ENCODE measurements at regions of chr18 and their contacts with region 1.

Region 1: DNA sequence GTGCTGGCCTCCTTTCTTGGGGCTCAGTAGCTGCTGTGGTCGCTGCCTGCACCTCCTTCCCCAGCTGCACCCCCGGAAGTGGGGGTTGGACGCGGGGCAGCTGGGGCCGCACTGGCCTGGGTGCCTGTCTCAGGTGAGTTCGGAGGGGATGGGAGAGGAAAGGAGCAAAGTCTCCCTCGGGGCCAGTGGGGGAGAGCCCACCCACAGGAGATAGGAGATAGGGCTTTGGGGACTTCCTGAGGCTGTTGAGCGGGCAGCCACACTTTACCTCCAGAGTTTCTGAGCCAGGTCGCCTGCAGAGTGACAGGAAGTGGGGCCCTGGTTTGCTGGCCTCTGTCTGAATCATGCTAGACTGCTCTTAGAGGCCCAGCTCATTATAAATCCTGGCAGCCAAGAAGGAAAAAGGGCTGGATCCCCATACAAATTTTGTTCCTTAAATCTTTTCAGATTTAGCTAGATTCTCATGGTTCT is 8.1 kb downstream of the MBP start:
- DNase-seq: peak; percentile 73
- H3K4me3 Mint-ChIP-seq: peak overlapping the region; percentile 57
- H3K27ac Mint-ChIP-seq: peak overlapping the region; percentile 86
- H3K4me1 Mint-ChIP-seq: peaks cover 86% of the 10 kb centered on the region
- H3K27me3 Mint-ChIP-seq: no peaks in the 10 kb centered on the region

Region 2: GRCh38 chr18:77108001-77108692 is 16.3 kb before region 1 on chr18:
- CTCF ChIA-PET with region 1: interaction called, 31 read pairs
- DNase-seq: peak; percentile 29
- H3K4me3 Mint-ChIP-seq: peak overlapping the region; percentile 40
- H3K27ac Mint-ChIP-seq: peak overlapping the region; percentile 90
- H3K4me1 Mint-ChIP-seq: peaks cover 96% of the 10 kb centered on the region
- H3K27me3 Mint-ChIP-seq: no peaks in the 10 kb centered on the region

Measured in activated naive CD4-positive, alpha-beta T cell treated with anti-CD3 and anti-CD28 coated beads, Interleukin-2, amount 10 ng/mL, durations not matched to agents 7 days and 5 days (primary cell).